Activated CD4-positive, alpha-beta T cell treated with anti-CD3 and anti-CD28 coated beads for 36 hours (primary cell): ENCODE measurements at regions of chr11 and their contacts with region 1.

Region 1: DNA sequence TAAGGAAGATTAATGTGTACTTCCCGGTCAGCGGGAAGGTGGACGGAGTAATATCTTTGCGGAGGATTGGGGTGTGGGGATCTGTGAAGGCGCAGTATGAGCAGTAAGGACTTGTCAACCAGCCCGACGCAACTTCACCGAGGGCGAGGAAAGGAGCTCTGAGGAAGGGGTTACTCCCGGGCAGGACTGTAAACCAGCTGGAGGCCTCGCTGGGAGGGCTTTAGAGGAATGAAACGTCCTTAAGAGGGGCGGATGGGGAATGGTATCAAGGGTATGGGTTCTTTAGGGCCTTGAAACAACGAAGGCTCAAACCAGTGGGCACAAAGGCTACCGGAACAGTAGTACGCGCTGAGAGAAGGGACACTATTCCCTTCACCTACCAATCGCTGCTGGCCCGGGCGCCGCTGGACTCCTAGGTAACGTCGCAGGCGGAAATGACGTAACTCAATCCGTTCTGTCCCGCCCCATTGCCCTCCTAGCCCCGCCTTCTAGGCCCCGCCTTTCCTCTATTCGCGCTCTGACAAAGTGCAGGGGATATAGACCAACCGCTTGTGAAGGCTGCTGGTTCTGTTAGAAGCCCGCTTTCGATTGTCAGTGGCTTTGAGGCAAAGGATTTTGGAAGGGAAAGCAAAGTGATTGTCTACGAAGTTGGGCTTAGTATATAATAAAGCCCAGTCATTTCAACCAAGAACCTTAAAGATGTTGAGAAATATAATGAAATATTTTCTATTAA is at the start of gene C11orf65:
- DNase-seq: peak; percentile 97
- ATAC-seq: peak; percentile 98
- H3K4me3 Mint-ChIP-seq: peak within 1 kb of the TSS; percentile 99
- H3K27ac Mint-ChIP-seq: peak within 1 kb of the TSS; percentile 98
- H3K4me1 Mint-ChIP-seq: peaks cover 12% of the 10 kb centered on the region
- H3K27me3 Mint-ChIP-seq: no peaks in the 10 kb centered on the region
- total RNA-seq, gene C11orf65: 3.4 to 3.6 TPM

Region 2: GRCh38 chr11:107457558-107458271 is 1009.5 kb before region 1 on chr11 and contains the start of gene CWF19L2:
- CTCF ChIA-PET with region 1: no interaction called
- POLR2A ChIA-PET with region 1: no interaction called
- intact Hi-C with region 1: loop called in 1 of 2 experiments (anchors 5 kb)
- DNase-seq: peak; percentile 94
- ATAC-seq: peak; percentile 99
- H3K4me3 Mint-ChIP-seq: peak within 1 kb of the TSS; percentile 84
- H3K27ac Mint-ChIP-seq: peak within 1 kb of the TSS; percentile 95
- H3K4me1 Mint-ChIP-seq: peaks cover 21% of the 10 kb centered on the region
- H3K27me3 Mint-ChIP-seq: no peaks in the 10 kb centered on the region
- total RNA-seq, gene CWF19L2: 14.1 to 14.3 TPM

Region 3: DNA sequence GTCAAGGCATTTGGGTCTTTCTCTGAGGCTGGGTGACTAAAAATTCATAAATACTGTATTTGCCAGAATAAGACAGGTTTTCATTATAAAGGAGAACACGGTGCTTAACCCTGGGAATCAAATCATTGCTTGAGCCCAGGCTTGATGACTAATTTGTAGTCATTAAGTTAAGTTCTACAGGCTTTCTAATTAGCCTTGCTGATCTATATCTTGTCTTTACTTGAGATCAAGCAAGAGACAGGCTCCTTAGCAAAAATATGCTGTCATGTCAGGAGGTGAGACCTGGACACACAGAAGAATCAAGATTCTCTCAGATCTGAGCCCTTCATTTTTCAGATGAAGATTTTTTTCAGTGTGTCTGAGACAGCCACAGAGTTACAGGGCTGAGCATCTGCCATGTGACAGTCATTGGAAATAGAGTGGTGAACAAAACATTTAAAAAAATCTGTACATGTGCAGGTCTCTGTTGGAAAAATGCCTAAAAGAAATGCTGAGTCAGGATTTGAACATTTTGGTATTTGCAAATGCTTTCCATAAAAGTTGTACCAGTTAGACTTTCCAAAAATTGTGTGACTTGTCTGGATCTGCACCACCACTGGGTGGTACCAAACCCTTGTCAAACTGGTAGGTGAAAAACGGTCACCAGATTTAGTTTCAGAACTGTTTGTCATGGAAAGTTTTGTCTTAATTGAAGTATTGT is 331.3 kb before region 1 on chr11:
- CTCF ChIA-PET with region 1: no interaction called
- POLR2A ChIA-PET with region 1: no interaction called
- intact Hi-C with region 1: loop called in 1 of 2 experiments (anchors 5 kb)
- DNase-seq: peak; percentile 60
- ATAC-seq: peak; percentile 60
- H3K4me3 Mint-ChIP-seq: no peak overlapping the region
- H3K27ac Mint-ChIP-seq: peak overlapping the region; percentile 80
- H3K4me1 Mint-ChIP-seq: peaks cover 26% of the 10 kb centered on the region
- H3K27me3 Mint-ChIP-seq: no peaks in the 10 kb centered on the region

Region 4: DNA sequence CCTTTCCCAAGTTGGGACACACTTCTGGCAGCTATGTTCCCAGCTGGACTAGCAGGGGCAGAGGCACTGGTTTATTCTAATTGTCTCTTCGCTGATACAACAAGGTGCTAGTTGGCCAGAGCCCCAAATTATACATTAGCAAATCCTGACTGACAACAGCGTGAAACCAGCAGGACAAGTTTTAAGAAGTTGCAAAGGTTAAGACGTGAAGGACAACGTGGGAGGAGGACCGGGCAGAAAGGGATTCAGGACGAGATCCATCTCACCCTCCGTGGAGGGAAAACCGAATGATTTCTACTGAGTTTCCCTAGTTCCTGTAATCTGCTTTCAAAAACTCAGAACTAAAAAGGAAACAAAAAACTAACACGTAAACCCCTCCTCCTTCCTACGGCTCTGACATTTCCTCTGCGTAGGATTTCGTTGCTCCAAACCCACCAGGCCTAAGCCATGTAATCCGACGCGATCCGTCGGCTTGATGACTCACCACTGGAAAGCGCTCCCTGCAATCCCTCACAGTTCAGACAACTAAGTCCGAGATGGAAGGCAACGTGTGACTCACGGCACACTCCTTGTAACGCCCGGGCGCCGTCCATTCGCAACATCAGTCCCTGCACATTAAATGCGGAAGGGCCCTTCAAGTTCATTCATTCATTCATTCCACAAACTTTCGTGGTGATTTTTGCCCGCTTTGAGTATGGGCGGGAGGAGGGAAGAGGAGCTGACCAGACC is 30.2 kb after region 1 on chr11:
- CTCF ChIA-PET with region 1: no interaction called
- POLR2A ChIA-PET with region 1: no interaction called
- intact Hi-C with region 1: loop called (anchors 1 kb)
- DNase-seq: peak; percentile 85
- ATAC-seq: peak; percentile 91
- H3K4me3 Mint-ChIP-seq: peak overlapping the region; percentile 81
- H3K27ac Mint-ChIP-seq: peak overlapping the region; percentile 91
- H3K4me1 Mint-ChIP-seq: peaks cover 17% of the 10 kb centered on the region
- H3K27me3 Mint-ChIP-seq: no peaks in the 10 kb centered on the region

Region 5: GRCh38 chr11:108647701-108648527 is 180.7 kb after region 1 on chr11:
- CTCF ChIA-PET with region 1: no interaction called
- POLR2A ChIA-PET with region 1: no interaction called
- intact Hi-C with region 1: loop called in 1 of 2 experiments (anchors 5 kb)
- DNase-seq: peak; percentile 81
- ATAC-seq: peak; percentile 99
- H3K4me3 Mint-ChIP-seq: no peak overlapping the region
- H3K27ac Mint-ChIP-seq: no peak overlapping the region
- H3K4me1 Mint-ChIP-seq: no peaks in the 10 kb centered on the region
- H3K27me3 Mint-ChIP-seq: no peaks in the 10 kb centered on the region

Region 6: GRCh38 chr11:108733479-108734116 is 266.3 kb after region 1 on chr11:
- CTCF ChIA-PET with region 1: no interaction called
- POLR2A ChIA-PET with region 1: no interaction called
- intact Hi-C with region 1: loop called in 1 of 2 experiments (anchors 1 kb)
- DNase-seq: peak; percentile 65
- ATAC-seq: peak; percentile 99
- H3K4me3 Mint-ChIP-seq: no peak overlapping the region
- H3K27ac Mint-ChIP-seq: peak overlapping the region; percentile 81
- H3K4me1 Mint-ChIP-seq: peaks cover 56% of the 10 kb centered on the region
- H3K27me3 Mint-ChIP-seq: no peaks in the 10 kb centered on the region